Activated CD4-positive, alpha-beta T cell treated with anti-CD3 and anti-CD28 coated beads for 36 hours (primary cell): ENCODE measurements at regions of chr6 and their contacts with region 1.

Region 1: GRCh38 chr6:52284460-52285176 is at the start of gene MCM3:
- DNase-seq: peak; percentile 98
- ATAC-seq: peak; percentile 97
- H3K4me3 Mint-ChIP-seq: no peak within 1 kb of the TSS
- H3K27ac Mint-ChIP-seq: peak within 1 kb of the TSS; percentile 82
- H3K4me1 Mint-ChIP-seq: peaks cover 47% of the 10 kb centered on the region
- H3K27me3 Mint-ChIP-seq: no peaks in the 10 kb centered on the region
- total RNA-seq, gene MCM3: 276 to 279 TPM

Region 2: DNA sequence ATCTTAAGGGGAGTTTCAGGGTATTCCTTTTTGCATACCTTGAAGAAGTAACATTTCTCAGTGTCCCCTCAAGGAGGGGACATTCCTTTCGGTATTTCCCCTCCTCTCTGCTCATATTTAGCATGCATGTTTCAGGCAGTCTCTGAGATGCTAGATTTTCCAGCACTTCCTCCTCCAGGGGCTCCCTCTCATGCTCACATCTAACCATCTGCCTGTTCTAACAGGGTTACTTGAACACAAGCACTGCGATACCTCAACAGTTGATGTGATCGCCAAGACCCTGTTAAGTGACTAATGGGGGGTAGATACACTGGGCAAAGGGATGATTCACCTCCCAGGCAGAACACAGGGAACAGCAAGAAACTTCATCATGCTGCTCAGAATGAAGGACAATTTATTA is 12.8 kb after region 1 on chr6:
- CTCF ChIA-PET with region 1: interaction called, 16 read pairs
- POLR2A ChIA-PET with region 1: interaction called, 7 read pairs
- intact Hi-C with region 1: loop called (anchors 1 kb)
- DNase-seq: no peak
- ATAC-seq: peak; percentile 10
- H3K4me3 Mint-ChIP-seq: peak overlapping the region; percentile 20
- H3K27ac Mint-ChIP-seq: peak overlapping the region; percentile 93
- H3K4me1 Mint-ChIP-seq: peaks cover 43% of the 10 kb centered on the region
- H3K27me3 Mint-ChIP-seq: no peaks in the 10 kb centered on the region

Region 3: GRCh38 chr6:52389626-52390360 is 105.2 kb after region 1 on chr6:
- CTCF ChIA-PET with region 1: interaction called, 46 read pairs
- POLR2A ChIA-PET with region 1: interaction called, 11 read pairs
- intact Hi-C with region 1: loop called (anchors 1 kb)
- DNase-seq: peak; percentile 74
- ATAC-seq: peak; percentile 52
- H3K4me3 Mint-ChIP-seq: peak overlapping the region; percentile 38
- H3K27ac Mint-ChIP-seq: peak overlapping the region; percentile 86
- H3K4me1 Mint-ChIP-seq: peaks cover 85% of the 10 kb centered on the region
- H3K27me3 Mint-ChIP-seq: no peaks in the 10 kb centered on the region

Region 4: DNA sequence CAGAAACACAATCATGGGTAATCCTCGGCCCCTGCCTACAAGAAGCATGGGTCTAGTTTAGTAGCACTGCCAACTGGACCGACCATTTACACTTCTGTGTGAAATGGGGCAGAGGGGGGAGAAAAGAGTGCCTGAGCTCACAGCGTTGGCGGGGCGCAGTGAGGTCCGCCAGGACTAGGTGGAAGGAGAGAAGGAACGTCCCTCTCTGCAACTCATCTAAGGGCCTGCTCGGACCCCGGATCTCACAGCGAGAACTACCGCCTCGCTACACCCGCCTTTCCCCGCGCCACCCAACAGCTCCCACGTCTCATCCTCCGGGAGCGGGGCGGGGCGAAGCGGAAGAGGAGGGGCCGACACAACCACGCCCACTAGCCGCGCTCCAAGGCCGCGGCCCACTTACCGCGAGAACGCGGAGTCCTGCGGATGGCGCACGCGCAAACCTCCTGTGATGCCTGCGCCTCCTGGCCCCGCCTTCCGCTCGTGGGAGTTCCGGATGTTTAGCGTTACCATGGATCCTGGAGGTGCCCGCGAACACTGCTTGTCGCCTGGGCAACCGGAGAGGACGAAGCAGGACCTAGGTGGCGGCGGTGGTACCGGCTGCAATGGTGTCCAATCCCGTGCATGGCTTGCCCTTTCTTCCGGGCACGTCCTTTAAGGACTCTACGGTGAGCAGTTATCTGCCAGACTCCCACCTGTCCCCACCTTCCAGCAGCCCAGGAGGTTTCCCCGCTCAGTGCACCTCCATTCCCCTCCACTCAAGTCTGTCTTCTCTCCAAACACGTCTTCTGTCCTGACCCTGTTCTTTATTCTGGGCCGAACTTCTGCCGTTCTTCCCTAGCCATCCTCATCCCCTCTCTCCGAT is 135.4 kb after region 1 on chr6 and contains the start of gene EFHC1:
- CTCF ChIA-PET with region 1: interaction called, 19 read pairs
- POLR2A ChIA-PET with region 1: interaction called, 10 read pairs
- intact Hi-C with region 1: loop called (anchors 1 kb)
- DNase-seq: peak; percentile 99
- ATAC-seq: peak; percentile 94
- H3K4me3 Mint-ChIP-seq: no peak within 1 kb of the TSS
- H3K27ac Mint-ChIP-seq: peak within 1 kb of the TSS; percentile 82
- H3K4me1 Mint-ChIP-seq: peaks cover 22% of the 10 kb centered on the region
- H3K27me3 Mint-ChIP-seq: no peaks in the 10 kb centered on the region
- total RNA-seq, gene EFHC1: 2.2 to 3.6 TPM

Region 5: GRCh38 chr6:52995913-52996645 is 711.5 kb after region 1 on chr6:
- CTCF ChIA-PET with region 1: no interaction called
- POLR2A ChIA-PET with region 1: no interaction called
- intact Hi-C with region 1: loop called in 1 of 2 experiments (anchors 2 kb)
- DNase-seq: peak; percentile 68
- ATAC-seq: no peak
- H3K4me3 Mint-ChIP-seq: peak overlapping the region; percentile 83
- H3K27ac Mint-ChIP-seq: peak overlapping the region; percentile 77
- H3K4me1 Mint-ChIP-seq: peaks cover 32% of the 10 kb centered on the region
- H3K27me3 Mint-ChIP-seq: peaks cover 4% of the 10 kb centered on the region

Region 6: GRCh38 chr6:53014063-53014462 is 729.4 kb after region 1 on chr6:
- CTCF ChIA-PET with region 1: no interaction called
- POLR2A ChIA-PET with region 1: no interaction called
- intact Hi-C with region 1: no loop called
- DNase-seq: no peak
- ATAC-seq: no peak
- H3K4me3 Mint-ChIP-seq: no peak overlapping the region
- H3K27ac Mint-ChIP-seq: no peak overlapping the region
- H3K4me1 Mint-ChIP-seq: no peaks in the 10 kb centered on the region
- H3K27me3 Mint-ChIP-seq: no peaks in the 10 kb centered on the region